Activated CD8-positive, alpha-beta T cell treated with anti-CD3 and anti-CD28 coated beads for 36 hours (primary cell): ENCODE measurements at regions of chr20 and their contacts with region 1.

Region 1: DNA sequence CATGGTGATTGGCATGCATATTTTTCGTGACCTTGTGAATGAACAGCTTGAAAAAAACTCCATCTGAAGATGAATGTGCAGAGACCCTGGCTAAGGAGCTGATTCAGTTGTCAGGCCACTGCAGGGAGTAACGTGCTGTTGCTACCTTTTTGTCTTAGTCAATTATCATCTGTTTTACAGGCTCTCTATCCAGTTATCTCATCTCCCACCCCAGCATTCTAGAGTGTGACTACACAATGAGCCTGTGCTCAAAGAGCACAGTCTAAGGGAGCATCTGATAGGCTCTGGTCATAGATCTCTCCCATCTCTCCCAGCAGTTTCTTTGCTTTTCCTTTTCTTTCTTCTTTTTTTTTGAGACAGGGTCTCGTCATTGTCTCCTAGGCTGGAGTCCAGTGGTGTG is 45.5 kb downstream of the NDRG3 start:
- DNase-seq: no peak
- ATAC-seq: no peak
- H3K4me3 Mint-ChIP-seq: no peak overlapping the region
- H3K27ac Mint-ChIP-seq: no peak overlapping the region
- H3K4me1 Mint-ChIP-seq: no peaks in the 10 kb centered on the region
- H3K27me3 Mint-ChIP-seq: no peaks in the 10 kb centered on the region
- CTCF ChIP-seq: no peak

Region 2: GRCh38 chr20:36688630-36689029 is 11.8 kb before region 1 on chr20:
- CTCF ChIA-PET with region 1: no interaction called
- POLR2A ChIA-PET with region 1: no interaction called
- intact Hi-C with region 1: loop called (anchors 1 kb)
- DNase-seq: no peak
- ATAC-seq: no peak
- H3K4me3 Mint-ChIP-seq: no peak overlapping the region
- H3K27ac Mint-ChIP-seq: no peak overlapping the region
- H3K4me1 Mint-ChIP-seq: no peaks in the 10 kb centered on the region
- H3K27me3 Mint-ChIP-seq: no peaks in the 10 kb centered on the region
- CTCF ChIP-seq: no peak

Region 3: GRCh38 chr20:36717657-36718056 is 17.2 kb after region 1 on chr20:
- CTCF ChIA-PET with region 1: no interaction called
- POLR2A ChIA-PET with region 1: no interaction called
- intact Hi-C with region 1: no loop called
- DNase-seq: peak; percentile 11
- ATAC-seq: no peak
- H3K4me3 Mint-ChIP-seq: no peak overlapping the region
- H3K27ac Mint-ChIP-seq: no peak overlapping the region
- H3K4me1 Mint-ChIP-seq: peaks cover 6% of the 10 kb centered on the region
- H3K27me3 Mint-ChIP-seq: no peaks in the 10 kb centered on the region
- CTCF ChIP-seq: peak; percentile 32

Region 4: DNA sequence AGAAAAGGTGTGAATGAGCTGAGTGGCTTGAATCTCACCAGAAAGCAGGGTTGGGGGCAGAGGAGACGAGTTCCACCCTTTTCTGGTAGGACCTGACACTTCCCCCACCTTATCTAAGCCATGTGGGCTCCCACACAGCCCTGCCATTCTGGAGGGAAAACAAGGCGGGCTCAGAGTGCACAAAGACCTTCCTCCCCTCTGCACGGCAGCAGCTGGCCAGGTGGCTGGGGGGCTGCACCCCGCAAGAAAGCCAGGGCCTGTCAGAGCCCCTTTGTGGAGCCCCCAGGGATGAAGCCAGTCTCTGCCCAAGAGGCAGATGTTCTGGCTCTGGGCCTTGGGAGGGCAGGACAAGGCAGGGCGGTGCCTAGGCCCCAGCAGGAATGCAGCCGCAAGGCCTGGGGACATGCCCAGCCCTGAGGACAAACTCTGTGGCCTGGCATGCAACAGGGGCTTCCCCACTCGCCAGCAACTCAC is 121.6 kb after region 1 on chr20:
- CTCF ChIA-PET with region 1: no interaction called
- POLR2A ChIA-PET with region 1: no interaction called
- intact Hi-C with region 1: no loop called
- DNase-seq: no peak
- ATAC-seq: no peak
- H3K4me3 Mint-ChIP-seq: no peak overlapping the region
- H3K27ac Mint-ChIP-seq: no peak overlapping the region
- H3K4me1 Mint-ChIP-seq: no peaks in the 10 kb centered on the region
- H3K27me3 Mint-ChIP-seq: no peaks in the 10 kb centered on the region
- CTCF ChIP-seq: no peak